ENCODE measurements at regions of chr20 and their contacts with region 1.

Region 1: GRCh38 chr20:32599783-32600340 is 14.7 kb upstream of the NOL4L start:
- DNase-seq: peak in 5 of 7 donors; percentile 34 to 47 (median 36)
- H3K4me3 ChIP-seq: no peak overlapping the region
- H3K27ac ChIP-seq: no peak overlapping the region
- H3K4me1 ChIP-seq: no peaks in the 10 kb centered on the region
- H3K27me3 ChIP-seq: no peaks in the 10 kb centered on the region
- CTCF ChIP-seq: no peak
- POLR2A ChIP-seq: no peak

Region 2: DNA sequence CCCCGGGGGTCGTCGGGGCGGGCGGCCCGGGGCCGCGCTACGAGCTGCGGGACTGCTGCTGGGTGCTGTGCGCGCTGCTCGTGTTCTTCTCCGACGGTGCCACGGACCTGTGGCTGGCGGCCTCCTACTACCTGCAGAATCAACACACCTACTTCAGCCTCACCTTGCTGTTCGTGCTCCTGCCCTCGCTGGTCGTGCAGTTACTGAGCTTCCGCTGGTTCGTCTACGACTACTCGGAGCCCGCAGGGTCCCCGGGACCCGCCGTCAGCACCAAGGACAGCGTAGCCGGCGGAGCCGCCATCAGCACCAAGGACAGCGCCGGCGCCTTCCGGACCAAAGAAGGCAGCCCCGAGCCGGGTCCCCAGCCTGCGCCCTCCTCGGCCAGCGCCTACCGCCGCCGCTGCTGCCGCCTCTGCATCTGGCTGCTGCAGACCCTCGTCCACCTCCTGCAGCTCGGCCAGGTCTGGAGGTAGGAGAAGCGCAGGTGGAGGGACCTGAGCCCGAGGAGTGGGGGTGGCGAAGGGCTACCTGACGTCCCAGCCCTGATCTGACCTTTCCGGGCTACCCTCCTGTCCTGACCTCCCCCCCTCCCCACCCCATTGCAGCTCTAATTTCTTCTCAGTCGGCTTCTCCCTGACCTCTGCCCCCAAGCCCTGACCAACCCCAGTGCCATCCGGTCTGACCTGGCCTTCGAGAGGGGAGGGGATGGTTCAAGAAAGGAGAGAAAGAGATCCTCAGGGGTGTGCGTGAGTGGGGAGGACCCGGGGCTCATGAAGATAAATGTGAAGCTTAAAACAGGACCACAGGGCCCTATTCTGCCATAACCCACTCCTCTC is 631.4 kb before region 1 on chr20:
- intact Hi-C with region 1: loop called in 1 of 2 experiments (anchors 10 kb)
- DNase-seq: peak; percentile 67 to 79 (median 74)
- H3K4me3 ChIP-seq: peak overlapping the region in 1 of 4 donors; percentile 29
- H3K27ac ChIP-seq: no peak overlapping the region
- H3K4me1 ChIP-seq: no peaks in the 10 kb centered on the region
- H3K27me3 ChIP-seq: peaks cover 19% of the 10 kb centered on the region
- CTCF ChIP-seq: no peak
- POLR2A ChIP-seq: no peak

Region 3: DNA sequence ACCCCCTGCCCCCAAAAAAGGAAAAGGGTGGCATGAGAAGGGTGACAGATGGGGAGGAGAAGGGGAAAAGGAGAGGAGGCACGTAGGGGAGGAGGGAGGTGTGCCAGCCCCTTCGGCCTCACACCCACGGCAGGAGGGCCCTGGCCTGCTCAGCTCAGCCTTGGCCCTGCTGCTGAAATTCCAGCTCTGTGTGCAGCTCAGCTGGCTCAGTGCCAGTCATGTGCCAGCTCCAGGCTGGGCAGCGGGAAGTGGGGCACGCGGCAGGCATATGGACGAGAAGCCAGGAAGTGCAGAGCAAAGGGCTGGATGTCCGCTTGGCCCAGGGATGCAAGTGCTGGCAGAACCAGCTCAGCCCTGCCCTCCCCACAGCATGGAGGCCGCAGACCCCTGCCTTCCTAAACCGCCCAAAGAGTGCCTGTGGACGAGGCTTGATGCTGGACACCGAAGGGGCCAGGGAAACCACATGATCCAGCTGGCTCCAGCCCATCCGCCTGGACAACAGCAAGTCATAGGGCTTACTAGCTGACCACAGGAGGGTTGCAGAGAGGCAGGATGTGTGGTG is 75.0 kb before region 1 on chr20:
- intact Hi-C with region 1: no loop called
- DNase-seq: peak; percentile 72 to 90 (median 83)
- H3K4me3 ChIP-seq: no peak overlapping the region
- H3K27ac ChIP-seq: peak overlapping the region in 1 of 5 donors; percentile 26
- H3K4me1 ChIP-seq: peaks cover 9 to 37% of the 10 kb centered on the region in 2 donors
- H3K27me3 ChIP-seq: no peaks in the 10 kb centered on the region
- CTCF ChIP-seq: no peak
- POLR2A ChIP-seq: no peak